Dorsolateral prefrontal cortex (tissue), 120 donors: ENCODE measurements at regions of chr10 and their contacts with region 1.

Region 1: DNA sequence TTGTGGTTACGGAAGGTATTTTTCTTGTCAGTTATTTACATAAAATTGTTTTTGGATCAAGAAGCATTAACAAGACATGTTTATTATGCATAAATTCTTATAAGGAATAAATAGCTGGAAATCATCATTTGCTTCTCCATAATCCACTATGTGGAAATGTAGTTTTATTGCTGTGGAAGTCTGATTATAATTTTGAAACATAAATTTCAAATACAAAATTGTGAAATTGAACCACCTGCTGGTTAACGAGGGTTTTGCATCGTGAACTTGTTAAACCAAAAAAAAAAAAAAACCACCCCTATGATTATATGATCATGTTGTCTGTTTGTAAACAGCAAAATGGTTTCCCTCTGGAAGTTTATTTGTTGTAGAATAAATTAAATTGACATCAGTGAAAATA is 25.9 kb downstream of the ABRAXAS2 start:
- DNase-seq: no peak
- H3K4me3 ChIP-seq: no peak overlapping the region
- H3K27ac ChIP-seq: no peak overlapping the region
- H3K27me3 ChIP-seq: no peaks in the 10 kb centered on the region
- CTCF ChIP-seq: peak; percentile 49 to 79 (median 66)

Region 2: DNA sequence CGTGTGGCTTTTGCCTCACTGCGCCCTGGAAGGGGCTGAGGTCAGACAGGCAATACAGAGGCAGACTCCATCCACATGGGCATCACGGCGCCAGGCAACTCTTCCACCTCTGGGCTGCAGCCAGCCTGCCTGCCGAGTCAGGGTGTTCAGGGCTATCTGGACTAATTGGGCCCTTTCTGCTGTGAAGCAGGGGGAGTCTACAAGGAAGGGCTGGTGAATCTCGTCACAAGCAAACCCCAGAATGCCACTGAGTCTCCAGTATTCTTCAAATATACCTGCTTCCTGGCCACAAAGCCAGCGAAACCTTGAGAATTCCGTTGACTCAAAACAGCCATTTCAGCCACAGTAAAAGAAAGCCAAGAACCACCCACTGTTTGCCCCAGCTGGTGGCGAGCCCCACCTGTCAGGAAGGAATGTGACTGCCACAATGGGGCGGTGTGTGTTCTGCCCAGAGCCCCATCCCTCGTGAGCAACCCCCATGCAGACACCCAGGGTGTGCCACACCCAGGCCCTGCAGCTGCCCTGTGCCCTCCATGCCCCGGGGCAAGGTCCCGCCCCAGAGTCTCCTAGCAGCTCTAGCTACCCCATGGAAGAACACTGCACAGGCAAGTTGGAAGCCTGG is 200.6 kb before region 1 on chr10:
- intact Hi-C with region 1: loop called in 1 of 2 experiments (anchors 10 kb)
- DNase-seq: no peak
- H3K4me3 ChIP-seq: no peak overlapping the region
- H3K27ac ChIP-seq: peak overlapping the region in 58 of 59 donors; percentile 39 to 98 (median 90)
- H3K27me3 ChIP-seq: no peaks in the 10 kb centered on the region
- CTCF ChIP-seq: no peak